ENCODE measurements at regions of chr6 and their contacts with region 1.

Region 1: DNA sequence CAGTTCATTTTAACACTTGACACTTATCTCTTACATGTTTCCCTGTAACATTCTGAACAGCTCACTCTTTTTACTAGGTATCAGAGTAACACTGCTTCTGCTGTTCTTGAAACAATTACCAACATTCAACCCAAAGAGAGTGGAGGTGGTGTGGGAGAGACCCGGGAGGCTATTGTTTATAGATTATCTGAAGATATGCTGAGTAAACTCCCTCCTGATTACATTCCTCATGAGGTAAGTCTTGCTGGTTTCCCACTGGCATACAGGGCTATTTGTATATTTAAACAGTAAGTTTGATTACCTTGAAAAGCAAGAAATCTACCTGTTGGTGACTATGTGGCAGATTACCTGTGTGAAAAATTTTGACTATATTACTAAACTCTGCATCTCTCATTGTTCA is 39.8 kb upstream of the GLP1R start:
- DNase-seq: peak in 1 of 2 experiments; percentile 27
- H3K4me3 ChIP-seq: no peak overlapping the region
- H3K4me3 Mint-ChIP-seq: no peak overlapping the region
- H3K27ac Mint-ChIP-seq: peak overlapping the region; percentile 19
- H3K4me1 ChIP-seq: peaks cover 21% of the 10 kb centered on the region
- H3K4me1 Mint-ChIP-seq: peaks cover 19% of the 10 kb centered on the region
- H3K27me3 ChIP-seq: no peaks in the 10 kb centered on the region
- H3K27me3 Mint-ChIP-seq: no peaks in the 10 kb centered on the region
- CTCF ChIP-seq: no peak

Region 2: GRCh38 chr6:38871741-38872568 is 136.8 kb before region 1 on chr6:
- CTCF ChIA-PET with region 1: no interaction called
- POLR2A ChIA-PET with region 1: no interaction called
- intact Hi-C with region 1: no loop called
- DNase-seq: peak; percentile 49 to 72
- H3K4me3 ChIP-seq: no peak overlapping the region
- H3K4me3 Mint-ChIP-seq: no peak overlapping the region
- H3K27ac Mint-ChIP-seq: no peak overlapping the region
- H3K4me1 ChIP-seq: no peaks in the 10 kb centered on the region
- H3K4me1 Mint-ChIP-seq: no peaks in the 10 kb centered on the region
- H3K27me3 ChIP-seq: no peaks in the 10 kb centered on the region
- H3K27me3 Mint-ChIP-seq: peaks cover 6% of the 10 kb centered on the region
- CTCF ChIP-seq: peak; percentile 73 to 93

Region 3: DNA sequence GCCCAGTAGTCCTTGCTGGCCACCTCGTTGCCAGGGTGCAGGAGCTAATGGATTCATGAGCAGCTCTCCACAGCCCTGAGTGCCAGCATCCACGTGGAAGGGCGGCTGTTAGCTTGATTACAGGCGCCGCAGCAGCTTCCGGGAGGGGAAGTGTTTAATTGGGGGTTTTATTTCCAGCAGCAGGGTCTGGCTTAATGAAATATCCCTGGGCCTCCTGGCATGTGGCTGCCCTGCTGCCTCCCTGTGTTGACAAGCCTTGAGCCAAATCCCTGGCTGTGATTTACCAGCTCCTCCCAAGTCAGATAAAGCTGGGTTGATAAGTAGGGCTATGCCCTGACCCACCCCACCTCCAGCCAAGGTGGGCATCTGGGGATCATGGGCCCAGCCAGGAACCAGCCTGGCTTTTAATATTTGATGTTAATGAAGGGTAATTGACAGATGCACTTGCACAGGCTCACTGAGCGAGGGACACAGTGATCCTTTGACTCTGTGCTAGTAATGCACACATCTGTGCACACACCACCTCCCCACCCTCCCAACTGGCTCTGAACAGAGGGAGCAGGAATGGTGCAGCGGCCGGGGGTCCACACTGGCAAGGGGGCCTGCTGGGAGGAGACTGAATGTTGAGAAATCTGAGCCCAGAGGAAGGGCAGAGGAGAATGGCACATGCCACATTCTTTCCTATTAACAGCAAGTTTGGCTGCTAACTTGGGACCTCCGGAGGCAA is 53.4 kb after region 1 on chr6:
- CTCF ChIA-PET with region 1: no interaction called
- POLR2A ChIA-PET with region 1: no interaction called
- intact Hi-C with region 1: loop called (anchors 2 kb)
- DNase-seq: no peak
- H3K4me3 ChIP-seq: no peak overlapping the region
- H3K4me3 Mint-ChIP-seq: no peak overlapping the region
- H3K27ac Mint-ChIP-seq: peak overlapping the region; percentile 89
- H3K4me1 ChIP-seq: peaks cover 43% of the 10 kb centered on the region
- H3K4me1 Mint-ChIP-seq: peaks cover 41% of the 10 kb centered on the region
- H3K27me3 ChIP-seq: no peaks in the 10 kb centered on the region
- H3K27me3 Mint-ChIP-seq: no peaks in the 10 kb centered on the region
- CTCF ChIP-seq: no peak

Region 4: DNA sequence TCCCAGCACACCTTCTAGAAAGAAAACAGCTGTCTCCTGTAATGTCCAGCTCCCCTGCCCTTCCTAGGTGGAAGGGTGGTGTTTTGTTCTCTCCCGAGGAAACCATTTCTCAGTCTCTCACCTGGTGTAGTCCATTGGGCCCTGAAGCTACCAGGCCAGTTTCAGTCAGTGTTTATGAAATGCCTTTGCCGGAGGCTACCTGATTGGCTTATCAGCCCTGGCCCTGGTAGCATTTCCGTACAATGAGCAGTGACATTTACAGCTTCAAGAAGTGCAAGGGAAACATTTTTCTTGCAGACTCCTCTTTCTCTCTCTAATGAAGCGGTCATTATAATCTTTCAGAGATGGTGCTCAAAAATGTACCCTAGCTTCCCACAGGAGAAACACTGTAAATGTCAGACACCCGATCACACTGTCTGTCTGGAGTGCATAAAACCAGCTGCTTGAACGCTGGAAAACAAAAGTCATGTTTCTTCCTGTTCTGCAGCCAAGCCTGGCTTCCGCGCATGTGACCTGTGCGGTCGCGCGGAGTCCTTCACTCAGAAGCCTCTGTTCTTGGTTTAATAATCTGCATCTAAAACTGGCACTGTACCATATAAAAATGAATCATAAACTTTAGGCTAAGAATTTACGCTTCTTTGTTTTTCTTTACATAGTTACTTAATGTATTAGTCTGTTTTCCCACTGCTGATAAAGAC is 134.6 kb after region 1 on chr6:
- CTCF ChIA-PET with region 1: no interaction called
- POLR2A ChIA-PET with region 1: no interaction called
- intact Hi-C with region 1: no loop called
- DNase-seq: no peak
- H3K4me3 ChIP-seq: no peak overlapping the region
- H3K4me3 Mint-ChIP-seq: no peak overlapping the region
- H3K27ac Mint-ChIP-seq: no peak overlapping the region
- H3K4me1 ChIP-seq: no peaks in the 10 kb centered on the region
- H3K4me1 Mint-ChIP-seq: no peaks in the 10 kb centered on the region
- H3K27me3 ChIP-seq: no peaks in the 10 kb centered on the region
- H3K27me3 Mint-ChIP-seq: peaks cover 10% of the 10 kb centered on the region
- CTCF ChIP-seq: no peak